ENCODE measurements at regions of chr11 and their contacts with region 1.

Region 1: DNA sequence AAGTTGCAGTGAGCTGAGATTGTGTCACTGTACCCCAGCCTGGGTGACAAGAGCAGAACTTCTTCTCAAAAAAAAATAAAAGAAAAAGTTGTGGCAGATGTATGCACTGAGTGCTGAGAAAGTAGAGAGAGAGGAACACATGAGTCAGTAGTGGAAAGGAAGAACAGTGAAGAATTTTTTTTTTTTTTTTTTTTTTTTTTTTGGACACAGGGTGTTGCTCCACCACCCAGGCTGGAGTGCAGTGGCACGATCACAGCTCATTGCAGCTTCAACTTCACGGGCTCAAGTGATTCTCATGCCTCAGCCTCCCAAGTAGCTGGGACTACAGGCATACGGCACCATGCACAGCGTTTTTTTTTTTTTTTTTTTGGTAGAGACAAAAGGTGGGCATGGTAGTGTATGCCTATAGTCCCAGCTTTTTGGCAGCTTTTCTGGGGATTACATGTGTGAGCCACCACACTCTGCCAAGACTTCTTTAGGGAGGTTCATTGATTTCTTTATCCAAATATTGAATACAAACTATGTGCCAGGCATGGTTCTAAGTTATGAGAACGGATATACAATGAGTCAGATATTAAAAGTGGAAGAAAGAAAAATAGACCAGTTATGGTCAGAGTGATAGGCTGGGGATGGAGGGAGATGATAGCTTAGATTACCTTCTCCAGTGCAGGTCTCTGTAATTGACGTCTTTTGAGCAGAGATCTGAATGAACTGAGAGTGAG is 62.0 kb downstream of the YAP1 start:
- DNase-seq: peak in 1 of 2 donors; percentile 82
- H3K4me3 ChIP-seq: peak overlapping the region; percentile 8 to 17
- H3K27ac ChIP-seq: peak overlapping the region; percentile 88 to 91
- H3K4me1 ChIP-seq: peaks cover 0 to 38% of the 10 kb centered on the region in 2 donors
- H3K27me3 ChIP-seq: no peaks in the 10 kb centered on the region
- CTCF ChIP-seq: no peak

Region 2: DNA sequence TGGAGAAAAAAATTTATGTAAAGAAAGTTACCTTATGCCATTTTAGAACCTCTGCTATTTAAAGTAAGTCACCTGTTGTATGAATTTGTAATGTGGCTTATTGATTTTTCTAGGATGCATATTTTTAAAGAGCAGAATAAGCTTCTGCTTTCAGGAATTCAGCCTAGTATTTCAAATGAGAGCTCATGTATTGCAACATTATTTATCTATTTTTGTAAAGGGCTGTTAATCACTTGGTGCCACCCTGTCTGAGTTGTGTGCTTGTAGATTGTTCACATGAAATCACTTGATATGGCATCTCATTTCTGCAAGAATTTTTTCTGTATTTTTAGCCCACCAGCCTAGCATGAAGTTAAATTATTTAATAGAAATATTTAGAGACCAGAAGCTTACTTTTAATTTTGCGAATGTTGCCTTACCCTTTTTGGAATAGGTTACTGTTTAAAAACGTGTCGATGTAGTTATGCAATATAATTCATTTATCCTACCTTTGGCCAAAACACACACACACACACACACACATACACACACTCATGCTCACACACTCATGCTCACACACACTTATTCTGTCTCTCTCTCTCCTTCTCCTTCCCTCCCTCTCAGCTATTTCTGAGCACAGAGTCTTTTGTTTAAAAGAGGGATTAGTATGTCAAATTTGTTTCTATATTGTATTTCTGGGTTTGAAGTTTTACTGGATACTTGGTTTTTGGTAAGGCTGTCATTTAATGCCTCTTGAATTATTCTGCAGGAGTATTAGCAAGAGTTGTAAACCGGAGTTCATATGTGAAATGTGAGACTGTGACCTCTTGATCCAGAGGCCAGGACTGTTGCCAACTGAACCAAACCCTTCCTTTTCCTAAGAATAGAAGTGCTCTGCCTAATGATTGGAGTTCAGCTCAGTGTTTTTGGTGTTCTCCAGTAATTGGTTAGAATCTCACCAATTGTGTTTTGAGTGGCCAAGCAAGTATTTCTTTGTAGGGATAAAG is 27.6 kb before region 1 on chr11:
- intact Hi-C with region 1: loop called (anchors 2 kb)
- DNase-seq: peak in 1 of 2 donors; percentile 72
- H3K4me3 ChIP-seq: peak overlapping the region; percentile 3 to 19
- H3K27ac ChIP-seq: peak overlapping the region; percentile 82 to 84
- H3K4me1 ChIP-seq: peaks cover 7 to 50% of the 10 kb centered on the region in 2 donors
- H3K27me3 ChIP-seq: no peaks in the 10 kb centered on the region
- CTCF ChIP-seq: no peak

Region 3: GRCh38 chr11:102306048-102306585 is 133.8 kb after region 1 on chr11:
- intact Hi-C with region 1: no loop called
- DNase-seq: no peak
- H3K4me3 ChIP-seq: no peak overlapping the region
- H3K27ac ChIP-seq: no peak overlapping the region
- H3K4me1 ChIP-seq: no peaks in the 10 kb centered on the region
- H3K27me3 ChIP-seq: no peaks in the 10 kb centered on the region
- CTCF ChIP-seq: no peak

Measured in ascending aorta (tissue), 2 donors.